ENCODE measurements at regions of chr5 and their contacts with region 1.

Region 1: DNA sequence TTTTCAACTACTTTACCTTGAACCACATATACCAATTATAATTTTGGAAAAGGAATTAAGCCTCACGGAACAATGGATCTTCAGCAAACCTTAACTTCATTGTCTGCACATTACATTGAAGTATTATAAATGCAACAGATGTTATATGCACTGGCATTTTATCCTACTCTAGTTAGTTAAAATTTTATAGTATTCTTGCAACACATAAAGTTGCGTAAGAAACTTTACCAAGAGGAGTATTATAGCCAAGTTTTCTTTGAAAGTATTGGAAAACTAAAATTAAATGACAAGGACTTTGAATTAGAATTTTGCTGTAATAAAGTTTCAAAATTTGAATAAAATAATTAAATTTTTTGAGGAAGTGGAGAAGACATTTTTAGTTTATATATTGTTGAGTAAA is 63.4 kb upstream of the SREK1 start:
- DNase-seq: no peak
- ATAC-seq: no peak
- H3K4me3 Mint-ChIP-seq: no peak overlapping the region
- H3K27ac Mint-ChIP-seq: no peak overlapping the region
- H3K4me1 Mint-ChIP-seq: no peaks in the 10 kb centered on the region
- H3K27me3 Mint-ChIP-seq: no peaks in the 10 kb centered on the region
- CTCF ChIP-seq: no peak

Region 2: GRCh38 chr5:65730910-65731309 is 349.8 kb before region 1 on chr5:
- CTCF ChIA-PET with region 1: no interaction called
- POLR2A ChIA-PET with region 1: interaction called, 13 read pairs
- intact Hi-C with region 1: no loop called
- DNase-seq: no peak
- ATAC-seq: no peak
- H3K4me3 Mint-ChIP-seq: no peak overlapping the region
- H3K27ac Mint-ChIP-seq: no peak overlapping the region
- H3K4me1 Mint-ChIP-seq: peaks cover 21% of the 10 kb centered on the region
- H3K27me3 Mint-ChIP-seq: no peaks in the 10 kb centered on the region
- CTCF ChIP-seq: no peak

Region 3: GRCh38 chr5:66066826-66067225 is 13.8 kb before region 1 on chr5:
- CTCF ChIA-PET with region 1: no interaction called
- POLR2A ChIA-PET with region 1: no interaction called
- intact Hi-C with region 1: loop called (anchors 2 kb)
- DNase-seq: no peak
- ATAC-seq: no peak
- H3K4me3 Mint-ChIP-seq: no peak overlapping the region
- H3K27ac Mint-ChIP-seq: no peak overlapping the region
- H3K4me1 Mint-ChIP-seq: peaks cover 10% of the 10 kb centered on the region
- H3K27me3 Mint-ChIP-seq: no peaks in the 10 kb centered on the region
- CTCF ChIP-seq: no peak

Region 4: GRCh38 chr5:66351813-66352212 is 271.1 kb after region 1 on chr5:
- CTCF ChIA-PET with region 1: no interaction called
- POLR2A ChIA-PET with region 1: no interaction called
- intact Hi-C with region 1: no loop called
- DNase-seq: no peak
- ATAC-seq: no peak
- H3K4me3 Mint-ChIP-seq: no peak overlapping the region
- H3K27ac Mint-ChIP-seq: no peak overlapping the region
- H3K4me1 Mint-ChIP-seq: no peaks in the 10 kb centered on the region
- H3K27me3 Mint-ChIP-seq: peaks cover 10% of the 10 kb centered on the region
- CTCF ChIP-seq: no peak

Measured in activated B cell treated with CpG ODN at 0.5 μM for 24 hours (primary cell).